ENCODE measurements at regions of chr1 and their contacts with region 1.

Region 1: GRCh38 chr1:18902523-18903290 is at the start of gene ALDH4A1:
- DNase-seq: peak; percentile 99
- H3K4me3 ChIP-seq: peak within 1 kb of the TSS; percentile 89
- H3K27ac ChIP-seq: peak within 1 kb of the TSS; percentile 95
- H3K4me1 ChIP-seq: peaks cover 26% of the 10 kb centered on the region
- H3K27me3 ChIP-seq: no peaks in the 10 kb centered on the region
- CTCF ChIP-seq: no peak
- total RNA-seq, gene ALDH4A1: 18.4 and 23.1 TPM in 2 replicates

Region 2: GRCh38 chr1:18883636-18884418 is 18.9 kb before region 1 on chr1:
- CTCF ChIA-PET with region 1: interaction called, 11 read pairs
- POLR2A ChIA-PET with region 1: no interaction called
- intact Hi-C with region 1: no loop called
- DNase-seq: peak; percentile 82
- H3K4me3 ChIP-seq: no peak overlapping the region
- H3K27ac ChIP-seq: no peak overlapping the region
- H3K4me1 ChIP-seq: peaks cover 9% of the 10 kb centered on the region
- H3K27me3 ChIP-seq: no peaks in the 10 kb centered on the region
- CTCF ChIP-seq: peak; percentile 91

Region 3: GRCh38 chr1:18913065-18913835 is 10.5 kb after region 1 on chr1:
- CTCF ChIA-PET with region 1: interaction called, 18 read pairs
- POLR2A ChIA-PET with region 1: no interaction called
- intact Hi-C with region 1: no loop called
- DNase-seq: peak; percentile 83
- H3K4me3 ChIP-seq: no peak overlapping the region
- H3K27ac ChIP-seq: peak overlapping the region; percentile 2
- H3K4me1 ChIP-seq: peaks cover 8% of the 10 kb centered on the region
- H3K27me3 ChIP-seq: no peaks in the 10 kb centered on the region
- CTCF ChIP-seq: peak; percentile 100

Region 4: GRCh38 chr1:19179597-19180264 is 277.0 kb after region 1 on chr1:
- CTCF ChIA-PET with region 1: no interaction called
- POLR2A ChIA-PET with region 1: no interaction called
- intact Hi-C with region 1: no loop called
- DNase-seq: peak; percentile 46
- H3K4me3 ChIP-seq: no peak overlapping the region
- H3K27ac ChIP-seq: no peak overlapping the region
- H3K4me1 ChIP-seq: no peaks in the 10 kb centered on the region
- H3K27me3 ChIP-seq: no peaks in the 10 kb centered on the region
- CTCF ChIP-seq: peak; percentile 44